KBM-7 (cell line): ENCODE measurements at regions of chr4 and their contacts with region 1.

Region 1: GRCh38 chr4:114386637-114387233 is 211.9 kb upstream of the UGT8 start:
- DNase-seq: peak; percentile 38

Region 2: GRCh38 chr4:113869743-113870375 is 516.9 kb before region 1 on chr4:
- in situ Hi-C with region 1: no loop called
- DNase-seq: no peak

Region 3: DNA sequence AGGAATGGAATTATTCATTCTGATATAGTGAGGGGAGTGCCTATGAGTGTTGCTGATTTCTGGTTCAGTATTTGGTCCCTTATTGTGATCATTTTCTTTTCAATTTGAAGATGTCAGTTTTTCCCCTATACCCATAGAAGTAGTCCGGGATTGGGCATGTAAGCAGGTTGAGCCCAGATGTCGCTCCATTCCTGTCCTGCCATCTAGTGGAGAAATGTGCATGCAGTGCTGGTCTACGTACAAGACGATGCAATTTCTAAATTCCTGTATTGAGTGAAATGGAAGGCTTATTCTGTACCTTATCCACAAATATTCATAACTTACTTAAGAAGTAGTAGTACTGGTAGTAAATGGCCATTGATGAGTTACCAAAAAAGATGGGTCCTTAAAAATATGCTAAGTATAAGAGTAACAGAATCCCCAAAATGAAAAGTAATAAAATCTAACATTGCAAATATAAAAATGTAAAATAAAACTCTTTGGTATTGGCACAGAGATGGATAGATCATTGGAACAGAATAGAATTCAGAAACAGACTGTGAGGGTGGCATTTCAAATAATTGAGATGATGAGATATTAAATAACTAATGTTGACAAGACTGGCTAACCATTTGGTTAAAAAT is 272.8 kb after region 1 on chr4:
- in situ Hi-C with region 1: loop called (anchors 25 kb)
- DNase-seq: peak; percentile 52